ENCODE measurements at regions of chr16 and their contacts with region 1.

Region 1: DNA sequence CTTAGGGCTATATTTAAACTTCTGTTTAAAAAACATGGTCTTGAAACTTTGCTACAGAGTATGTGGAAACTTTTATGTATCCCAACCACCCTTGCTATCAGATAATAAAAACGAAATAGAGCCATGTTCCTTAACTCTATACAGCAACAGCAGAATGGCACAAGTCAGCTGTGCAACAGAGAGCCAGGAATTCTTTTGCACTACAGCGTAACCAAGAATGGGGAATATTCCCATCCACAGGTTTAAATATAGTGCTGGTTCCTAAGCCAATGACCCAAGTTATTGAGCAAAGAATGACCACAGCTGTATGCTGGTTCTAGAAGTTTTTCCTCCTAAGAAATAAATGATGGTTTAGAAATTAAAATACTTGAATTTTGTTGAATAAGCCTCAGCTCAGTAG is 33.1 kb downstream of the SETD6 start:
- DNase-seq: no peak
- ATAC-seq: no peak
- H3K4me3 ChIP-seq: no peak overlapping the region
- H3K27ac ChIP-seq: no peak overlapping the region
- H3K4me1 ChIP-seq: no peaks in the 10 kb centered on the region
- H3K27me3 ChIP-seq: no peaks in the 10 kb centered on the region
- CTCF ChIP-seq: no peak

Region 2: DNA sequence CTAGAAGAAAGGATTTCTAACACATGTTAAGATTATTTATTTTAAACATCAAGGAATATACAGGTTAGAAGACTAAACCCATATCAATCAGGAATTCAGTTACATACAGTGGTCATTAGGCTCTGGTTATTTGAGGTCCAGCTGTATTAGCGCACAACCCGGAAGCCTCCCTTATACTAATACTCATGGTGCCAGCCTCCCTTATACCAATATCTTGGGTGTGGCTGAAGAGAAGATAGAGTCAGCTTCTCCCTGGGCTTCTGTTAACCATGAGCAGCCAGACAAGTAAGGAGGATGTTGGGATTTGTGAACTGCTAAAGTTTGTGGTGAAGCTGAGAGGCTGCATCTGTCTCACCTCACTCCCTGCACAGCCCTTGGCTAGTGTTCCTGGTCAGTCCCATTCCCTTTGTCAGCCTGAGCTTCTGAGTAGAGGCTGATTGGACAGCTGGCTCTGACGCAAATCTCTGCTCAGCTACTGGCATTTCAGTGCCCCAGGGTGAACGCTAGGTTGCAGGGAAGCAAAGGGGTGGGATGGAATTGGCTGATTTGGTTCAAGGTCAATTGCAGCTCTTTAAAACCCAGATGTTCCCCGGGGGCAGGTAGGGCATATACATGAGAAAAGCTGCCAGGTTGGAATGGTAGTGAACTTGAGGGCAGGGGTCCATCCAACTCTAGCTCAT is 104.2 kb after region 1 on chr16:
- CTCF ChIA-PET with region 1: no interaction called
- POLR2A ChIA-PET with region 1: interaction called, 10 read pairs
- in situ Hi-C with region 1: no loop called
- intact Hi-C with region 1: no loop called
- DNase-seq: no peak
- ATAC-seq: no peak
- H3K4me3 ChIP-seq: no peak overlapping the region
- H3K27ac ChIP-seq: no peak overlapping the region
- H3K4me1 ChIP-seq: no peaks in the 10 kb centered on the region
- H3K27me3 ChIP-seq: no peaks in the 10 kb centered on the region
- CTCF ChIP-seq: no peak